ENCODE measurements at regions of chr4 and their contacts with region 1.

Region 1: GRCh38 chr4:109815151-109816081 is at the start of gene GAR1:
- DNase-seq: peak; percentile 94
- H3K4me3 Mint-ChIP-seq: peak within 1 kb of the TSS; percentile 96
- H3K27ac Mint-ChIP-seq: peak within 1 kb of the TSS; percentile 99
- H3K4me1 Mint-ChIP-seq: peaks cover 28% of the 10 kb centered on the region
- H3K27me3 Mint-ChIP-seq: no peaks in the 10 kb centered on the region
- CTCF ChIP-seq: no peak
- total RNA-seq, gene GAR1: 21.2 and 28.7 TPM in 2 replicates

Region 2: DNA sequence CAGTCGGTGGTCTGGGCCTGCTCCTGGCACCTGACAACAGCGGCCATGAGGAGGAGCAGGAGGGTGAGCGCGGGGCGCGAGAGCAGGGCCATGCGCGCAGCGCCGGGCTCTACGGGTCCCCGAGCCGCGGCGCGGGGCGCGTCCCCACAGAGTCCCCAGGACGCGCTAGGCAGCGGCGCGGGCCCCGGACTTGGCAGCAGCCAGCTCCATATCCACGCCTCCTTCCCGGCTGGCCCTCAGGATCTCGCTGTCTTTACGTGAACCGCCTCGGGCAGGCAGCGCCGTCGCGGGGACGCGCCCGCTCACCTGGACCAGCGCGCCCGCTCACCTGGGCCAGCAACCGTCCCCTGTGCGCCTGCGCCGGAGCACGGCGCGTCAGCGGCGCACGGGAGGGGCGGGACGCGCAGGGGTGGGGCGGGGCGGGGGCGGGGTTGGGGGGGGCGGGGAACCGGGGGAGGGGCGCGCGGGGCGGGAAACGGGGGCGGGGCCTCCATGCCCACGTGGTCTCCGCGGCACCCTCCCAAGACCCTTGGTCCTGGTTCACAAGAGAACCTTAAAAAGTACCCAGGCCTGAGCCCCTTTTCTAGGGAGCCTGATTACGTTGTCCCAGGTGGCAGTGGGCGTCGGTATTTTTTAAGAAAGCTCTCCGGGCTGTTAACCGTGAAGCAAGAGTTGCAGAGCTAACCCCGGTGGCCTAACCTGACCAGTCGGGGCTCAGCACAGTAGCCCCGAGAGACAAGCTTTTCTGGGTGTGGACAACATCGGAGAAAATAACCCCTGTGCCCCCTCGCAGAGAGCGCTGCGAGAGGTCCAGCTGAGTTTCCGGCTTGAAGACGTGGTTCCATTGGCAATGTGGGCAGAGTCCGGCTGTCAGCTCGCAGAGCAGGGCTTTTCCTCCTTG is 85.4 kb before region 1 on chr4 and contains the start of gene PLA2G12A:
- CTCF ChIA-PET with region 1: no interaction called
- POLR2A ChIA-PET with region 1: interaction called, 19 read pairs
- intact Hi-C with region 1: no loop called
- DNase-seq: peak; percentile 90
- H3K4me3 Mint-ChIP-seq: peak within 1 kb of the TSS; percentile 88
- H3K27ac Mint-ChIP-seq: peak within 1 kb of the TSS; percentile 52
- H3K4me1 Mint-ChIP-seq: peaks cover 18% of the 10 kb centered on the region
- H3K27me3 Mint-ChIP-seq: no peaks in the 10 kb centered on the region
- CTCF ChIP-seq: no peak
- total RNA-seq, gene PLA2G12A: 52.4 and 58.0 TPM in 2 replicates